Thyroid gland (tissue), 4 donors: ENCODE measurements at regions of chr4 and their contacts with region 1.

Region 1: DNA sequence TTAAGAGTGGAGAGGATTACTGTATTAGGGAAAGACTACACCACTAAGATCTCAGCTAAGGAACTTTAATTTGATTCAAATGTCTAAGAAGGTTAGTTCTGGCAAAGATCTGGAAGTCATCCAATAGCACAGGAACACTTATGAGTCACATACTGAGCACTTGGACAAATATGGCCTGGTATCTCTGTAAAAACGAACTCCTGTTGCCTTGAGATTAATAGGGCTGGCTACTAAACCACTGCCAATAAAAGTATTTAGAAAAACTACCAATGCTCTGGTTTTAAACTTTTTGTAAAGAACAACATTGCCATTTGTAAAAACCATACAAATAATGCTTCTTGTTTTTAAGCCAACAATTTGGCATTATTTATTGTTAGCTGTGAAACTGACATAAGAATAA is 70.5 kb downstream of the SEC24D start:
- DNase-seq: no peak
- H3K4me3 ChIP-seq: no peak overlapping the region
- H3K27ac ChIP-seq: peak overlapping the region; percentile 16 to 80 (median 71)
- H3K4me1 ChIP-seq: peaks cover 24 to 36% of the 10 kb centered on the region in 2 donors
- H3K27me3 ChIP-seq: no peaks in the 10 kb centered on the region
- CTCF ChIP-seq: no peak
- POLR2A ChIP-seq: no peak

Region 2: DNA sequence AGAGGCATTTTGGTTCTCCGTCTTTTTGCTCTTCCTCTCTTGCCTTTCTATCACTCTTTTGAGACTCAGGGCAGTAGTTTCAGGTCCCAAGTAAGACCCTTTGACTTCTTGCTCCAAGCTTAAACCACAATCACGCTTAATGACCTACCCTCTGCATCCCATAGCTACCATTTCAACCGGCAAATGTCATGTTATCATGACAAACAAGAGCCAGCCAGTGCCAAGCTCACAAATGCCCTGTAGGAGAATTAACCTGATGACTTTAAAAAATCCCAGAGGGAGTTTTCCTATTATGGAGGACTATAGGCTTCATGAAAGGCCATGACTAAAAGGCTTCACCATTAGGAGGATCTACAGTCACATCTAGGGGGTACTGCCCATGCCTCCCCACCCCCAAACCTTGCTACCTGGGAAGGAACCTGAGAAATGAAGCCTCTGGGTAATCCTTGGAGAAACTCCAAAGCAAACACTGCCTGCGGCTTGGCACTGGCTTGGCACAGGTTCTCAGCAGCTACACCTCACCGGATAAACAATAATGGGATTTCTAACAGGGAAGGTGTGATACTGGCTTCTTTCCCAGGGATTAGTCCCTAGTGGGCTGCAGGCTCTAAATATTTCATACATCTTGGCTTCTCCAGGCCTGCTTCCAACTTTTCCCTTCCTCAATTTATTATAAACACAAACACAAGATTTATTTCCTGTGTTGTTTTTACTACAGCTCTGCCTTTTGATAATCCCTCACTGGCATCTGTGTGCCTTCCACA is 57.9 kb after region 1 on chr4:
- intact Hi-C with region 1: no loop called
- DNase-seq: peak; percentile 50 to 56
- H3K4me3 ChIP-seq: no peak overlapping the region
- H3K27ac ChIP-seq: peak overlapping the region in 1 of 3 donors; percentile 50
- H3K4me1 ChIP-seq: peaks cover 21 to 28% of the 10 kb centered on the region in 2 donors
- H3K27me3 ChIP-seq: no peaks in the 10 kb centered on the region
- CTCF ChIP-seq: no peak
- POLR2A ChIP-seq: no peak

Region 3: DNA sequence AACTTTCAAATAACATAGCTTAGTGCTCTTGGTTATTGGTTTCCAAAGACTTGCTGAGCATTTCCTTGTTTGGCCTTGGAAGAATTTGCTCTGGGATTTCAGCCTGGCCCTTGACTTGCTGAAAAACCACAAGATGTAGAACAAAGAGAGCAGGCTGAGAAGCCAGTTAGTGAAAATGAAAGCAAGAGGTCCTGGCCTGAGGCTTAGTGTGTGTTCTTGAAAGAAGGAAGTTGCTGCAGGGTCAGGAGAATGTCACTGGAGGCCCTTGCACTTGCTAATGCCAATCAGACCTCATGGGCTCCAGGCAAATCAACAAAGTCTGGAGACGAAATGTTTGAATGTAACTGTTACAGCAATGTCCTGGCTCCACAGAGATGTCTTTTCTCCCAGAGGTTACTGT is 202.6 kb after region 1 on chr4:
- intact Hi-C with region 1: loop called (anchors 10 kb)
- DNase-seq: peak; percentile 41 to 44
- H3K4me3 ChIP-seq: no peak overlapping the region
- H3K27ac ChIP-seq: peak overlapping the region; percentile 34 to 56 (median 56)
- H3K4me1 ChIP-seq: peaks cover 4 to 12% of the 10 kb centered on the region in 2 donors
- H3K27me3 ChIP-seq: no peaks in the 10 kb centered on the region
- CTCF ChIP-seq: no peak
- POLR2A ChIP-seq: no peak

Region 4: DNA sequence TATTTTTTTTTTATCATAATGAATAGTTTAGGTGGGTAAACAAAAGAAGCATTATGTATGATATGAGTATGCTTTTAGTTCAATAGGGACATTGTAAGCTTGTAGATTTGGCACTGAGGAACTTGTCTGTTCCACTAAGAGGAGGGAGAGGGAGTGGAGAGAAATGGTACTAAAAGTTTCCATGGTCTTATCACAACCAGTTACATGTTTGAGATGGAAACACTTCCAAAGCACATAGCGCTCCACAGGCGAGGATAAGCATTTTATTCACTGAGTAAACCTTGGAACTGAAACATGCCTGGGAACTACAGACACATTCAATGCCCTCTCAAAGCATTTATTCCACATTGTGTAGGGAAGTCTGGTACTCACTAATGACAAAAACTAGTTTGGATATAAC is 385.8 kb after region 1 on chr4:
- intact Hi-C with region 1: no loop called
- DNase-seq: no peak
- H3K4me3 ChIP-seq: no peak overlapping the region
- H3K27ac ChIP-seq: no peak overlapping the region
- H3K4me1 ChIP-seq: no peaks in the 10 kb centered on the region
- H3K27me3 ChIP-seq: no peaks in the 10 kb centered on the region
- CTCF ChIP-seq: no peak
- POLR2A ChIP-seq: no peak